ENCODE measurements at regions of chr9 and their contacts with region 1.

Region 1: DNA sequence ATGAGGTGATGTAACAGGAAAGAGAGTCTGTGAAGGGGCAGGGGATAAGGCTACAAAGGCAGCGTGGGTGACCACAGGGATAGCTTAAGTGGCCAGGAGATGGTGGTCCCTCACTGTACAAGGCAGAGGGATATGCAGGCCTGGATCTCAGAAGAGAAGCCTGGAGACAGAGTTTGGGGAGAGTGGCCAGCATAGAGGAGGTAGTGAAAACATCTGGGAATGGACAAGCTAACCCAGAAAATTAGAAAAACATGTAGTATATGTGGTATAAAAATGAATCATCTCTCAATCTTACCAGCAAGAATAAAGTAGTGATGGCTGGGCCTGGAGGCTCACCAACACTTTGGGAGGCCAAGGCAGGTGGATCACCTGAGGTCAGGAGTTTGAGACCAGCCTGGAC is 349.2 kb upstream of the KLF4 start:
- DNase-seq: no peak
- H3K4me3 ChIP-seq: no peak overlapping the region
- H3K27ac ChIP-seq: no peak overlapping the region
- H3K4me1 ChIP-seq: no peaks in the 10 kb centered on the region
- H3K27me3 ChIP-seq: no peaks in the 10 kb centered on the region
- CTCF ChIP-seq: no peak

Region 2: DNA sequence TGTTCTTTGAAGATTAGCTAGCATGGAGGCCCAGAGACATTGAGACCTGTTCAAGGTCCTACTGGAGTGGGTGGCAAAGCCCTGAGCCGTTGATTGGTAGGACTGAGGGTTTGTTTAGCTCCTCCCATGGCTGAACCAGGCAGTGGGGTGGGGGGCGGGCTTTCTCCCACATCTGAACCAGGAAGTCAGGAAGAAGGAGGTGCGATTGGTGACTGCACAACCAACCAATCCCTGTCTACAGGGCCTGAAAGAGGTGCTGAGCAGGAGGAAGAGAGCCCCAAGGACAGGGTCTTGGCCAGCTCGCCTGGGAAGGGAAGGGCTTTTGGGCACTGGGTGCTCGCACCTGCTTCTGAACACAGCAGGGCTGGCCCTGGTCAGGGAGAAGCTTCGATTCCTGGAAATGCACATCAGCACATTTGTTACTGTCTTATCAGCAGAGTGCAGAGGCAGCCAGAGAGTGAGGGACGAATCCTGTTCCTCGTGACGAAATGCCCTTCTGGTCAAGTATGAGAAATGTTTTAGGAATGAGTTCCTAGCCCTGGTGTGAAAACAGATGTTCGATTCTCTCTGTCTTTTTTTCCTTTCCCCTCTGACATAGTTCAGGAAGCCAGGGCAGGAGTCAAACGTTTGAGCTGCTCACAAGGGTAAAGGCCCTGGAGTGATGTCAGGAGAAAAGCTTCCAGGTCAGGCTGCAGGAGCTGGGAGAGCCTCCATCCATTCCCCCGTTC is 54.4 kb before region 1 on chr9:
- CTCF ChIA-PET with region 1: interaction called, 4 read pairs
- dilution Hi-C with region 1: loop called (anchors 5 kb)
- in situ Hi-C with region 1: no loop called
- intact Hi-C with region 1: no loop called
- DNase-seq: peak; percentile 5
- H3K4me3 ChIP-seq: no peak overlapping the region
- H3K27ac ChIP-seq: no peak overlapping the region
- H3K4me1 ChIP-seq: no peaks in the 10 kb centered on the region
- H3K27me3 ChIP-seq: no peaks in the 10 kb centered on the region
- CTCF ChIP-seq: no peak

Region 3: GRCh38 chr9:107874591-107875369 is 36.0 kb after region 1 on chr9:
- CTCF ChIA-PET with region 1: no interaction called
- dilution Hi-C with region 1: no loop called
- in situ Hi-C with region 1: no loop called
- intact Hi-C with region 1: no loop called
- DNase-seq: no peak
- H3K4me3 ChIP-seq: no peak overlapping the region
- H3K27ac ChIP-seq: no peak overlapping the region
- H3K4me1 ChIP-seq: no peaks in the 10 kb centered on the region
- H3K27me3 ChIP-seq: no peaks in the 10 kb centered on the region
- CTCF ChIP-seq: no peak

Region 4: GRCh38 chr9:107919263-107919662 is 80.5 kb after region 1 on chr9:
- CTCF ChIA-PET with region 1: no interaction called
- dilution Hi-C with region 1: no loop called
- in situ Hi-C with region 1: no loop called
- intact Hi-C with region 1: no loop called
- DNase-seq: no peak
- H3K4me3 ChIP-seq: no peak overlapping the region
- H3K27ac ChIP-seq: no peak overlapping the region
- H3K4me1 ChIP-seq: no peaks in the 10 kb centered on the region
- H3K27me3 ChIP-seq: no peaks in the 10 kb centered on the region
- CTCF ChIP-seq: no peak

Measured in mammary epithelial cell (primary cell).